ENCODE measurements at regions of chr9 and their contacts with region 1.

Region 1: GRCh38 chr9:105244003-105244733 is at the start of gene SLC44A1:
- DNase-seq: peak; percentile 97 to 99 (median 99)
- ATAC-seq: peak; percentile 96 to 99 (median 98)
- H3K4me3 ChIP-seq: peak within 1 kb of the TSS; percentile 70 to 90 (median 82)
- H3K27ac ChIP-seq: peak within 1 kb of the TSS; percentile 73 to 89 (median 82)
- H3K4me1 ChIP-seq: peaks cover 0 to 50% (median 29%) of the 10 kb centered on the region in 12 donors
- H3K27me3 ChIP-seq: no peaks in the 10 kb centered on the region
- CTCF ChIP-seq: peak in 5 of 12 donors; percentile 10 to 33 (median 16)
- POLR2A ChIP-seq: peak in 1 of 2 donors; percentile 90
- total RNA-seq, gene SLC44A1: 14.6 to 29.4 (median 21.3) TPM

Region 2: DNA sequence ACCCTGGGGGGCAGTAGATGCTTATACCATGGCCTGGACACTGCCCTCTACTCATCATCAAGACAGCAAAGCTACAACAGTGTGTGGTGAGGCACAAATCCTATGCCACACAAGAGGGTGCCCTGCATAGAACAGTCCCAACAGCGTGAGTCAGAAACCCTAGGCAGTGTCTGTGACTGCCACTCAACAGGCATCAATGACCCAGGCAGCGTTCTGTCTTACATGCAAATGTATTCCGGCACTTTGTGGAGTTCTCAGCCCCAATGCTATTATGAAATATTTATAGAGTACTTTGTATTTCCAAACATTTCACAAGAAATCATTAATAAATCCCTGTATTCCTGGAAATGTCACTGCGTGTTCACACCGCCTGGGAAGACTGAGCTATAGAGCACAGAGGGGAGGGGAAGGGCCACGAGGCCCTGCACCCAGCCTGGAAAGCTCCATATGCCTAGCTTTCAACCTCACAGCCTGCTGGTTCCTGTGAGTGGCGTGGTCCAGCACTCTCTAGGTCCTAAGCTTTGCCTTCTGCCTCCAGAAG is 402.5 kb before region 1 on chr9:
- intact Hi-C with region 1: no loop called
- DNase-seq: no peak
- ATAC-seq: no peak
- H3K4me3 ChIP-seq: no peak overlapping the region
- H3K27ac ChIP-seq: no peak overlapping the region
- H3K4me1 ChIP-seq: peaks cover 0 to 7% (median 3%) of the 10 kb centered on the region in 12 donors
- H3K27me3 ChIP-seq: no peaks in the 10 kb centered on the region
- CTCF ChIP-seq: no peak
- POLR2A ChIP-seq: no peak

Region 3: GRCh38 chr9:104863180-104863883 is 380.8 kb before region 1 on chr9:
- intact Hi-C with region 1: loop called in 1 of 10 experiments (anchors 10 kb)
- DNase-seq: peak in 2 of 5 donors; percentile 27 to 41
- ATAC-seq: peak; percentile 60 to 81 (median 68)
- H3K4me3 ChIP-seq: no peak overlapping the region
- H3K27ac ChIP-seq: peak overlapping the region in 2 of 12 donors; percentile 26 to 44
- H3K4me1 ChIP-seq: peaks cover 0 to 57% (median 27%) of the 10 kb centered on the region in 12 donors
- H3K27me3 ChIP-seq: no peaks in the 10 kb centered on the region
- CTCF ChIP-seq: peak; percentile 57 to 91 (median 77)
- POLR2A ChIP-seq: no peak

Region 4: GRCh38 chr9:105290398-105290797 is 46.2 kb after region 1 on chr9:
- intact Hi-C with region 1: loop called in 4 of 10 experiments (anchors 5 kb)
- DNase-seq: no peak
- ATAC-seq: no peak
- H3K4me3 ChIP-seq: no peak overlapping the region
- H3K27ac ChIP-seq: no peak overlapping the region
- H3K4me1 ChIP-seq: peaks cover 0 to 39% (median 6%) of the 10 kb centered on the region in 12 donors
- H3K27me3 ChIP-seq: no peaks in the 10 kb centered on the region
- CTCF ChIP-seq: no peak
- POLR2A ChIP-seq: no peak

Region 5: GRCh38 chr9:105341434-105342144 is 97.4 kb after region 1 on chr9:
- intact Hi-C with region 1: loop called in 2 of 10 experiments (anchors 10 kb)
- DNase-seq: no peak
- ATAC-seq: no peak
- H3K4me3 ChIP-seq: peak overlapping the region in 4 of 12 donors; percentile 0 to 36 (median 4)
- H3K27ac ChIP-seq: peak overlapping the region in 1 of 12 donors; percentile 59
- H3K4me1 ChIP-seq: peaks cover 0 to 28% (median 7%) of the 10 kb centered on the region in 12 donors
- H3K27me3 ChIP-seq: no peaks in the 10 kb centered on the region
- CTCF ChIP-seq: no peak
- POLR2A ChIP-seq: no peak

Region 6: GRCh38 chr9:105392531-105392930 is 148.4 kb after region 1 on chr9:
- intact Hi-C with region 1: no loop called
- DNase-seq: no peak
- ATAC-seq: no peak
- H3K4me3 ChIP-seq: no peak overlapping the region
- H3K27ac ChIP-seq: no peak overlapping the region
- H3K4me1 ChIP-seq: no peaks in the 10 kb centered on the region
- H3K27me3 ChIP-seq: no peaks in the 10 kb centered on the region
- CTCF ChIP-seq: no peak
- POLR2A ChIP-seq: no peak

Region 7: DNA sequence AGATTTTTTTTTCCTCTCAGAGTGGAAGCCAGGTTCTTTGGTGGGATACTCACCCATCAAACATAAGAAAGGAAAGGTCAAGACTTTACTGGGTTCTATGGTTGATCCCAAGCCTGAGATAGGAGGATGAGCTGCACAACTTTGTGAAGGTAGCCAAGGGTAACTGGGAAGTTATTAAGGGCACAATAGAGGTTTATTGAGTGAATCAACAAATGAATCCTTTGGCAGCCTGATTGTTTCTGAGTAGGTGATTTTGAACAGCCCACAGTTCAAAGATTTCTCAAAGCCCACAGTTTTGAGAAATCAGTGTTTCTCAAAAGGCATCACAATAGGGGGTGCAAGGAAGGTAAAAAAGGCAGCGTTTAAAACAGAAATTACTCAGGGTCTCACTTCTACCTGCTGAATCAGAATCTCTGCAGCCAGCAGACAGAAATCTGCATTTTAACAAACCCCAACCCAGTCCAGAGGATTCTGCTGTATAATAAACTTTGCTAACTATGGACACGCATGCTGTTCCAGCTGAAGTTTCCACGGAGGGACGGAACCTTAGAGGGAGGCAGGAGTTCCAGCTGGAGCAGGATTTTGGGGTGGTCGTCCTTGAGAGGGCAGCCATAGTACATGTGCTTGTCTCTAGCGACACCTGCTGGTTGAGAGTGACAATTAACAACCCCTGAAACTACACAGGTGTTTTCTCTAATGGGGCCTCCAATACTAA is 170.9 kb after region 1 on chr9:
- intact Hi-C with region 1: loop called in 2 of 10 experiments (anchors 5 to 10 kb)
- DNase-seq: peak in 3 of 5 donors; percentile 42 to 60 (median 49)
- ATAC-seq: peak; percentile 45 to 82 (median 69)
- H3K4me3 ChIP-seq: no peak overlapping the region
- H3K27ac ChIP-seq: no peak overlapping the region
- H3K4me1 ChIP-seq: peaks cover 0 to 5% (median 0%) of the 10 kb centered on the region in 12 donors
- H3K27me3 ChIP-seq: no peaks in the 10 kb centered on the region
- CTCF ChIP-seq: peak; percentile 77 to 94 (median 86)
- POLR2A ChIP-seq: no peak